ENCODE measurements at regions of chr12 and their contacts with region 1.

Region 1: DNA sequence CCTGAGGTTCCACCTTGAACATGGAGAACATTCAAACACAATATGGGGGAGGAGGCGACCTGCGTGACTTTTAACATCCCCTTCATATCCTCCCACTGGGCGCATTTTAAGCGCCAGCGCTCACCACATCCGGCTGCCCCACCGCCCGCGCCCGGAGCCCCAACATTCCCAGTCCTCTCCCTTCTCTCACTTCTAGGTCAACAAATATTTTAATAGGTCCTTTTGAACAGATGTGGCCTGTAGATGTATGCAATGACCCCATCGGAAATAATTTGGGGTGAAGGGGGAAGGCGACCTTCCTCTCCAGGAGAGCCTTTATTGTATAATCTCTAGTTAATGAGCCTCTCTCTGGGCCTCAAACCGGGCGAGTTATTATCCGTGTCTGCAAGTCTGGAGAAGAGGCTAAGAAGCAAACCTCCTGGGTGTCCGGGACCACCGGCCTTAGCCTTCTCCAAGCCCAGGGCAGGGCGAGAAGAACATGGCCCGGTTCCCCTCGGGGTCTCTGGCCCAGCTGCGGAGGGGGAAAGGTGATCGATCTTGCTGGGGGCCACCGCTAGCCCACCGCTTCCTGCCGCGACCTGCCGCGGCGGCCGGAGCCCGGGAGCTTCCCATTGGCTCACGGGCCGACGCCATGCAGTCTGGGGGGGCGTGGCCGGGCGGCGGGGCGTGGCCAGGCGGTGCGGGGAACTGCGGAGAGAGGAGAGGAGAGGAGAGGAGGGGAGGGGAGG is 83.2 kb upstream of the HMGA2 start:
- DNase-seq: peak; percentile 70
- H3K4me3 Mint-ChIP-seq: peak overlapping the region; percentile 62
- H3K27ac Mint-ChIP-seq: no peak overlapping the region
- H3K4me1 Mint-ChIP-seq: peaks cover 11% of the 10 kb centered on the region
- H3K27me3 Mint-ChIP-seq: peaks cover 25% of the 10 kb centered on the region

Region 2: DNA sequence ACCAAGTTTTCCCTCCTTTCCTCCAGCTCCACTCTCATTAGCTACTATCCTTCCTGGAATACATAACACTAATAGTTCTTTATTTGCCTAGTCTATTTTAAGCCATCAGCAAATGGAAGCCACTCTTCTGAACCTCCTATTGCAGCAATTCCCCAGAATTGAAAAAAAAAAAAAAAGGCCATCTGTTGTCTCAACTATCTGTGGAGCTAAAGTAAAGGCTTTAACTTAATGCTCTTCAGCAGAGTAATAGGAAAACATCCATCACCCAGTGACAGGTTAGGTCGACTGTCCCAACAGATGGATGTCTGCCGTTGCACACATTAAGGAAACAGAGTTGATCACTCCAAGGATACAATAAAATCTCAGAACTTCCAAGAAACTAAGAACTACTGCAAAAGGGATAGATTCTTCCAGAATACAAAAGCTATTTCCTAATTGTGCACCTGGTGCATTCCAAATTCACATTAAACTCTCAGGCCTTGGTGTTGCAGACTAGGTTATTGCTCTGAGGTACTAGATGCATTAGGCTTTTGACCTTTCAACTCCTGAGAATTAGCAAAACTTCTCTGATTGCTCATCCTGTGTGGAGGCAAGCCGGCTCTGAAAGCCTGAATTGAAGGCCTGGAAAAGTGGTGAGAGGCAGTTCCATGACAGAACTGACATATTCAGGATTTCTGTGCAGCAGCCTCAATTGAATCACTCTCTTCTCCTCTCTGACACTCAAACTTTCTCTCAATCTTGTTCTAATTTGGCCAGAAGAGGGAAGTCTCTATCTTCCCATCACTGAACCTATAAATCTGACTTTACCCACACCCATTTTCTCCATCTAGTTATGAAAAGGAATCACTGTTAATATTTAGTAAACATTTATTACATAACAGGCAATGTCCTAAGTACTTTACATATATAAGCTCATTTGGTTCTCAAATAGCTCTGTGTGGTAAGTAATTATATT is 155.1 kb before region 1 on chr12:
- CTCF ChIA-PET with region 1: no interaction called
- intact Hi-C with region 1: no loop called
- DNase-seq: no peak
- H3K4me3 Mint-ChIP-seq: no peak overlapping the region
- H3K27ac Mint-ChIP-seq: no peak overlapping the region
- H3K4me1 Mint-ChIP-seq: no peaks in the 10 kb centered on the region
- H3K27me3 Mint-ChIP-seq: peaks cover 2% of the 10 kb centered on the region

Region 3: DNA sequence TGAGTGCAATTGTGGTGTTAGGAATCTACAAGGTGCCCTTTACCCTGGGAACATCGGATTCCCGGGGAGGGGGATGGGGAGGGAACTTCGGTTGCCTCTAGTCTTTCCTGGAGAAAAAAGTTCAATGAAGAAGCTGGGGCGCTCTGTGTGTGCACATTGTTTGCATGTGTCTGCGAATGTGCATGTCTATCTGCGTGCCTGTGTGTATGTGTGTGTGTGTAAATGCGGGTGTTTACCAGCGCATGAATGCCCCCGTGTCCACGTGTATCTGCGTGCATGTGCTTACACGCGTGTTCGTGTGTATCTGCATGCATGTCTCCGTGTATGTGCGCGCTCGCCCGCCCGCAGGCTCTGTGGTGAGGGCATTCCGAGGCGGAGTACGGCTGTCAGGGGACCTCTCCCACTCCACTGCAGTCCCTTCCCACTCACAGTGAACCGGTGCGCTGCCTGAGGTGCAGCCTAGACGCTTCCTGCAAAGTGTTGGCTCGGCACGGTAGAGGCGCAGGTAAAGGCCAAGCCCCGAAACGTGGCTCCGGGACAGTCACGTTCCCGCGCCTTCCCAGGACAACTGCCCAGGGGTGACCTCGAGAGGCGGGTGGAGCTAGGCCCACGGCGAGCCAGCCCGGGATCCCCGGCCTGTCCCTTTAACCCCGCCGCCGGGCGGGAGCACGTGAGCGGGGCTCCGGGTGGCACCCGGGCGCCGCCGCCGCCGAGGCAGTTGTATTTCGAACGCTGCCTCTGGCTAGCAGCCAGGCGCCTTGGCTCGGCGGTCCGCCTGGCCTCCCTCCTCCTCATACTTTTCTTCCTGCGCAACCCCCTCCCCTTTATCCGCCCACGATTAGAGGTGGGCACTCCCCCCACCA is 82.7 kb after region 1 on chr12:
- CTCF ChIA-PET with region 1: no interaction called
- intact Hi-C with region 1: loop called (anchors 5 kb)
- DNase-seq: peak; percentile 7
- H3K4me3 Mint-ChIP-seq: peak overlapping the region; percentile 69
- H3K27ac Mint-ChIP-seq: no peak overlapping the region
- H3K4me1 Mint-ChIP-seq: peaks cover 22% of the 10 kb centered on the region
- H3K27me3 Mint-ChIP-seq: peaks cover 62% of the 10 kb centered on the region

Measured in activated naive CD4-positive, alpha-beta T cell treated with anti-CD3 and anti-CD28 coated beads for 36 hours (primary cell).